HCT116 (cell line): ENCODE measurements at regions of chr1 and their contacts with region 1.

Region 1: DNA sequence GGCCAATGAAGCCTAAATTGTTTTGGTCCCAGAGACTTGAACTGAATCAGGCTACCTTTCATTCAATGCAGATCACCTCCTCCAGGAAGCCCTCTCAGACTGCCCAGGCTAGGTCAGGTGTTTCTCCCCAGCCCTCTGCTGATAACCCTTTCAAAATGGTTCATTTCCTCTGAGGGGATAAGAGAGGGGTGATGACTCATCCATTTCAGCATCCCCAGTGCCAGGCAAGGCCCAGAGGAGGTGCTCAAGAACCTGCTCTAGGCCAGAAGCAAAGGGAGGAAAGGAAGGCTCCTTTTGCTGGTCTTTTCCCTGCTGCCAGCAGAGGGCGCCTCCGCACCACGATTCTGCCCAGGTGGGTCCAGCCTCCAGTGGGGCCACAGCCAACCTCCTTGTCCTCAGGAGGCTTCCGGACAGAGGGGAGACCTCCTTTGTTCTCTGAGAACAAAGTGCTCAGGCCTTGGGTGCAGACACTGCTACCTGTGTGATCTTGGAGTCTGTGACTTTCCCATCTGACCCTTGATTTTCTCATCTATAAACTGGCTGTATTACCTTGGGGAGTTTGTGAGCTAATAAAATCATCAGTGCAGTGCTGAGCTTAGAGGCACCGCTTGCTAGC is 45.3 kb upstream of the ARHGEF10L start:
- DNase-seq: peak; percentile 86
- ATAC-seq: peak; percentile 94
- H3K4me3 ChIP-seq: no peak overlapping the region
- H3K27ac ChIP-seq: no peak overlapping the region
- H3K4me1 ChIP-seq: peaks cover 21 to 44% of the 10 kb centered on the region in 2 experiments; a peak in 3 of 4 replicates
- H3K27me3 ChIP-seq: no peaks in the 10 kb centered on the region
- CTCF ChIP-seq: peak; percentile 97 to 99 (median 98)
- POLR2A ChIP-seq: no peak
- RAD21 ChIP-seq: peak; percentile 98

Region 2: DNA sequence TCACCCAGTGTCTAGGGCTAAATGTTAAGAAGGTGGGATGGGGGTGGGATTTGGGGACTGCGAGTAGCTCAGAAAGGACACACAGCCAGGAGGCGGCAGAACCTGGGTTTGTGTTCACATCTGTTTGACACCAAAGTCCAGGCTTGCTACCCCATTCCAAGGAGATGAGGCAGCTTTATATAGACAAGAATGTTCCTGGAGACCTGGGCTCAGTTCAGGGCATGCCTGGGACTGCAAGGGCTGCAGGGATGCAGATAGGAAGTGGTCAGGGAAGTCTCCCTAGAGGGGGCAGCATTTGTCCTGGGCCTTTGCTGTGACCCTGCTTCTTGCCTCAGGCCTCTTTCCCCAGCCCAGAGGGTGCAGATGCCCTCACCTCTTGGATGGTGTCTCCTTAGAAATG is 229.1 kb before region 1 on chr1:
- CTCF ChIA-PET with region 1: no interaction called
- POLR2A ChIA-PET with region 1: no interaction called
- RAD21 ChIA-PET with region 1: no interaction called
- intact Hi-C with region 1: no loop called
- DNase-seq: no peak
- ATAC-seq: peak; percentile 69
- H3K4me3 ChIP-seq: no peak overlapping the region
- H3K27ac ChIP-seq: no peak overlapping the region
- H3K4me1 ChIP-seq: peaks cover 0 to under 1% of the 10 kb centered on the region in 2 experiments; a peak in 2 of 4 replicates
- H3K27me3 ChIP-seq: no peaks in the 10 kb centered on the region
- CTCF ChIP-seq: no peak
- POLR2A ChIP-seq: no peak
- RAD21 ChIP-seq: no peak

Region 3: DNA sequence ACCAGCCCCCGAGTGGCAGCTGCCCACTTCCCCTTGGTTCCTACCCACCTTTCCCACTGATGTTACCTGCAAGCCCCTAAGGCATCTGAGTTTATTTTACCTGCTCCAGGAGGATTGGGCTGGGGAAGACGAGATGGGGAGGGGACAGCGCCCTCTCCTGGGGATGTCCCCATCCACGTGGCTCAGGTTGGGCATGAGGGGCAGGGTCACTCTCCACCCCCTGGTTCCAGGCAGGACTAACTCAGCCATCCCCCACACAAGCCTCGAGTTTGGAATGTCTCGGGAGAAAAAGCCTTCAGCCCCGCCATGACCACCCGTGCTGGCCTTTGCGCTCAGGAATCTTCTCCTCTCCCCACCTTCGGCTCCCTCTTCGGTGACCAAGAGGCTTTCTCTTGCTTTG is 135.2 kb after region 1 on chr1:
- CTCF ChIA-PET with region 1: interaction called, 9 read pairs
- POLR2A ChIA-PET with region 1: no interaction called
- RAD21 ChIA-PET with region 1: no interaction called
- intact Hi-C with region 1: loop called (anchors 1 kb)
- DNase-seq: no peak
- ATAC-seq: peak; percentile 56
- H3K4me3 ChIP-seq: no peak overlapping the region
- H3K27ac ChIP-seq: no peak overlapping the region
- H3K4me1 ChIP-seq: peaks cover 9 to 15% of the 10 kb centered on the region in 2 experiments
- H3K27me3 ChIP-seq: no peaks in the 10 kb centered on the region
- CTCF ChIP-seq: peak; percentile 38 to 72 (median 62); a peak in 5 of 6 replicates
- POLR2A ChIP-seq: no peak
- RAD21 ChIP-seq: peak; percentile 54

Region 4: GRCh38 chr1:17696417-17697301 is 202.4 kb after region 1 on chr1:
- CTCF ChIA-PET with region 1: interaction called, 5 read pairs
- POLR2A ChIA-PET with region 1: no interaction called
- RAD21 ChIA-PET with region 1: no interaction called
- intact Hi-C with region 1: loop called (anchors 1 kb)
- DNase-seq: peak; percentile 7
- ATAC-seq: peak; percentile 89
- H3K4me3 ChIP-seq: no peak overlapping the region
- H3K27ac ChIP-seq: no peak overlapping the region
- H3K4me1 ChIP-seq: peaks cover 4 to 6% of the 10 kb centered on the region in 2 experiments
- H3K27me3 ChIP-seq: no peaks in the 10 kb centered on the region
- CTCF ChIP-seq: peak; percentile 35 to 56 (median 48); a peak in 5 of 6 replicates
- POLR2A ChIP-seq: no peak
- RAD21 ChIP-seq: 0 out of 2 replicates have a peak, but pooled peaks have one; percentile 38

Region 5: DNA sequence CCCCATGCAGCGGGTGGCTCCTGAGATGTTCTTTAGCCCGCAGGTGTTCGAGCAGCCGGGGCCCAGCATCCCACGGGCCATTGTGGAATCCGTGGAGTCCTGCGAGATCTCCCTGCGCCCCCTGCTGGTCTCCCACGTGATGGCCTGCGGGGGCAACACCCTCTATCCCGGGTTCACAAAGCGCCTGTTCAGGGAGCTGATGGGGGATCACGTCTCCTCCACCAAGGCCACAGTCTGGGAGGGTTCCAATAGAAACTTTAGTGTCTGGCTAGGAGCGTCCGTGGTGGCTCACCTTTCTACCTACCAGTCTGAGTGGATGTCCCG is 331.9 kb after region 1 on chr1:
- CTCF ChIA-PET with region 1: interaction called, 5 read pairs
- POLR2A ChIA-PET with region 1: no interaction called
- RAD21 ChIA-PET with region 1: no interaction called
- intact Hi-C with region 1: loop called (anchors 1 kb)
- DNase-seq: peak; percentile 8
- ATAC-seq: peak; percentile 93
- H3K4me3 ChIP-seq: no peak overlapping the region
- H3K27ac ChIP-seq: no peak overlapping the region
- H3K4me1 ChIP-seq: no peaks in the 10 kb centered on the region
- H3K27me3 ChIP-seq: peaks cover 15% of the 10 kb centered on the region; the same call in 1 of the 2 replicates
- CTCF ChIP-seq: peak; percentile 55 to 83 (median 76); a peak in 5 of 6 replicates
- POLR2A ChIP-seq: no peak
- RAD21 ChIP-seq: peak; percentile 68